ENCODE measurements at regions of chr2 and their contacts with region 1.

Region 1: GRCh38 chr2:69436938-69437750 is at the start of gene NFU1:
- DNase-seq: peak; percentile 97 to 98 (median 97)
- ATAC-seq: peak; percentile 99
- H3K4me3 ChIP-seq: peak within 1 kb of the TSS; percentile 75
- H3K27ac ChIP-seq: peak within 1 kb of the TSS; percentile 96
- H3K4me1 ChIP-seq: peaks cover 15 to 16% of the 10 kb centered on the region in 2 experiments; a peak in 4 of 5 replicates
- H3K27me3 ChIP-seq: no peaks in the 10 kb centered on the region
- CTCF ChIP-seq: peak; percentile 72 to 78 (median 75)
- EP300 ChIP-seq: no peak
- POLR2A ChIP-seq: peak; percentile 95
- RAD21 ChIP-seq: peak; percentile 6 to 46; a peak in 3 of 4 replicates
- polyA plus RNA-seq, gene NFU1: 33.9 to 59.4 TPM

Region 2: GRCh38 chr2:68214381-68214780 is 1222.8 kb before region 1 on chr2:
- CTCF ChIA-PET with region 1: no interaction called
- POLR2A ChIA-PET with region 1: no interaction called
- in situ Hi-C with region 1: no loop called
- intact Hi-C with region 1: no loop called
- DNase-seq: no peak
- ATAC-seq: no peak
- H3K4me3 ChIP-seq: no peak overlapping the region
- H3K27ac ChIP-seq: no peak overlapping the region
- H3K4me1 ChIP-seq: peaks cover 3 to 19% of the 10 kb centered on the region in 2 experiments; a peak in 4 of 5 replicates
- H3K27me3 ChIP-seq: no peaks in the 10 kb centered on the region
- CTCF ChIP-seq: no peak
- EP300 ChIP-seq: no peak
- POLR2A ChIP-seq: no peak
- RAD21 ChIP-seq: no peak

Region 3: DNA sequence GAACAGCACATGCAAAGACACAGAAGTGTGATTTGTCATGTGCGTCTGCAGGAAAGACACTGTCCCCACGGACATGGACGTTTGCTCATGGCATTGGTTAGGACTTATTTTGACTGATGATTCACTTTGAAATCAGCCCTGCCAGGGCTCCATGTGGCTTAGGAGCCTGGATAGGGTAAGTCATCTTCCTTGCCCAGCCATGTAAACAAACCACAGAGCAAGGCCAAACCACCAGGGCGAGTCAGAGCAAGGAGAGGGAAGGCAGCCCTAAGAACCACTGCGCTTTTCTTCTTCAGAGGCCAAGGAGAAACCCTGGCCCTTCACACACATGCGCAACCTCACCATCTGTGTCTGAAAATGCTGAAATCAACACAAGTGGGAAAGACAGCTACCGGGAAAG is 138.9 kb before region 1 on chr2:
- CTCF ChIA-PET with region 1: no interaction called
- POLR2A ChIA-PET with region 1: no interaction called
- in situ Hi-C with region 1: no loop called
- intact Hi-C with region 1: no loop called
- DNase-seq: no peak
- ATAC-seq: no peak
- H3K4me3 ChIP-seq: no peak overlapping the region
- H3K27ac ChIP-seq: no peak overlapping the region
- H3K4me1 ChIP-seq: no peaks in the 10 kb centered on the region; a peak in 1 of 5 replicates
- H3K27me3 ChIP-seq: peaks cover 19 to 61% of the 10 kb centered on the region in 2 experiments
- CTCF ChIP-seq: no peak
- EP300 ChIP-seq: no peak
- POLR2A ChIP-seq: no peak
- RAD21 ChIP-seq: no peak

Region 4: DNA sequence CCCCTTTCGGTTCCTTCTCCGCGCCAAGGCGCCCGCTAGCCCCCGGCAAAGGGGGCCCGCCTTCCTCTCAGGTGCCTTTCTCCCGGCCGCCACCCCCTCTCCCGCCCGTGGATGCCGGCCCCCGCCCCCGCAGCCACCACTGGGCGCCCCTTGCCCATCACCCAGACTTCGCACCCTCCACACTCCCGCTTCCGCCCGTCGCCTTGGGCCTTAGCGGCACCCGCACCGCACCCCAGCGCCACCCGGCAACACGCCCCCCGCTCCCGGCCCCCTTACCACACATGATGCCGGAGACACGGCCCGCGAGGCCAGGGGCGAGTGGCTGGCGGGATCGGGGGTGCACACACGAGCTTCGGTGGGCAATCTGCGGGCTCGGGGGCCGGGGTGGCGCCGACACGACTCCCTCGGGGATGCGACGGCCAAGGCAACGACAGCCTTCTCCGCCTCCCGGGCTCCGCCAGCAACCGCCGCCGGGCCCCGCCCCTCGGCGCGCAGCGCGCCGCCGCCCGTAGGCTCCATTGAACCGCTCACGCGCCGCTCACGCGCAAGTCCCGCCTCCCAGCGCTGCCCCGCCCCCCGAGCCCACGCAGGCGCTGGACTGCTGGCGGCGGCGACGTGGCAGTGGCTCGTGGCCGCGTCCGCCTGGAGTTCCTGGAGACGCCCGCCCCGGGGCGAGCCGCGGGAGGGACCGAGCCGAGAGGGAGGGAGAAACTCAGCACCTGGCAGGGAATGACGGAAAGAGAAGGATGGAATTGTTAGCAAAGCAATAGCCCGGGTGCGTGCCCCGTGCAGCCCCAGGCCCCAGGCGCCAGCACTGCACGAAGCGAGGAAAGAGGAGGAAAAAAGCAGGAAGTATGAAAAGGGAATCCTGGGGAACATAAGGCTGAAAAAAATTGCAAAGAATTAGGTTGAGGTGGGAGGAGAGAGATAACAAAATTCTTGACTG is 50.1 kb before region 1 on chr2 and contains the start of gene GFPT1:
- CTCF ChIA-PET with region 1: no interaction called
- POLR2A ChIA-PET with region 1: interaction called, 14 read pairs
- in situ Hi-C with region 1: no loop called
- intact Hi-C with region 1: loop called (anchors 2 kb)
- DNase-seq: peak; percentile 94 to 96 (median 94)
- ATAC-seq: peak; percentile 91
- H3K4me3 ChIP-seq: peak within 1 kb of the TSS; percentile 94
- H3K27ac ChIP-seq: peak within 1 kb of the TSS; percentile 90
- H3K4me1 ChIP-seq: peaks cover 7 to 20% of the 10 kb centered on the region in 2 experiments
- H3K27me3 ChIP-seq: no peaks in the 10 kb centered on the region
- CTCF ChIP-seq: no peak
- EP300 ChIP-seq: no peak
- POLR2A ChIP-seq: peak; percentile 94
- RAD21 ChIP-seq: no peak
- polyA plus RNA-seq, gene GFPT1: 6.6 to 8.6 TPM

Region 5: DNA sequence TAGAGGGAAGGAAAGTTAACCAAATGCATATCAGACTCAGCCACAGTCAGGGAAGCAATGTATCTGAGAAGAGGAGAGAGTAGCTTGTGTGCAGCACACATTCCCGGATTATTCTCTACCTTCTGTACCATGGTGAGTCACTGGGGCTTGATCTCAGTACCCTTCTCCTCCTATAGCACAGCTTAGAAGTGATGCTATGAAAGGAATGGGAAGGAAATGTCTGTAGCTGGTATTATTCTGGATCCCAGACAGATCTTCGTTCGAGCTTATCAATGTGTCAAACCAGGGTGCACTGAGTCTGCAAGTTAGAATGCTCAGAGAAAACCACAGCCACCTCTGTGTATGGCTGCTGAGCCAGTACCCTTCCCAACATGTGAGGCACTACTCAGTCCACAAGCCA is 88.1 kb after region 1 on chr2:
- CTCF ChIA-PET with region 1: no interaction called
- POLR2A ChIA-PET with region 1: no interaction called
- in situ Hi-C with region 1: no loop called
- intact Hi-C with region 1: no loop called
- DNase-seq: no peak
- ATAC-seq: no peak
- H3K4me3 ChIP-seq: no peak overlapping the region
- H3K27ac ChIP-seq: no peak overlapping the region
- H3K4me1 ChIP-seq: no peaks in the 10 kb centered on the region
- H3K27me3 ChIP-seq: no peaks in the 10 kb centered on the region
- CTCF ChIP-seq: no peak
- EP300 ChIP-seq: no peak
- POLR2A ChIP-seq: no peak
- RAD21 ChIP-seq: no peak

Measured in K562 (cell line).